ENCODE measurements at regions of chr9 and their contacts with region 1.

Region 1: DNA sequence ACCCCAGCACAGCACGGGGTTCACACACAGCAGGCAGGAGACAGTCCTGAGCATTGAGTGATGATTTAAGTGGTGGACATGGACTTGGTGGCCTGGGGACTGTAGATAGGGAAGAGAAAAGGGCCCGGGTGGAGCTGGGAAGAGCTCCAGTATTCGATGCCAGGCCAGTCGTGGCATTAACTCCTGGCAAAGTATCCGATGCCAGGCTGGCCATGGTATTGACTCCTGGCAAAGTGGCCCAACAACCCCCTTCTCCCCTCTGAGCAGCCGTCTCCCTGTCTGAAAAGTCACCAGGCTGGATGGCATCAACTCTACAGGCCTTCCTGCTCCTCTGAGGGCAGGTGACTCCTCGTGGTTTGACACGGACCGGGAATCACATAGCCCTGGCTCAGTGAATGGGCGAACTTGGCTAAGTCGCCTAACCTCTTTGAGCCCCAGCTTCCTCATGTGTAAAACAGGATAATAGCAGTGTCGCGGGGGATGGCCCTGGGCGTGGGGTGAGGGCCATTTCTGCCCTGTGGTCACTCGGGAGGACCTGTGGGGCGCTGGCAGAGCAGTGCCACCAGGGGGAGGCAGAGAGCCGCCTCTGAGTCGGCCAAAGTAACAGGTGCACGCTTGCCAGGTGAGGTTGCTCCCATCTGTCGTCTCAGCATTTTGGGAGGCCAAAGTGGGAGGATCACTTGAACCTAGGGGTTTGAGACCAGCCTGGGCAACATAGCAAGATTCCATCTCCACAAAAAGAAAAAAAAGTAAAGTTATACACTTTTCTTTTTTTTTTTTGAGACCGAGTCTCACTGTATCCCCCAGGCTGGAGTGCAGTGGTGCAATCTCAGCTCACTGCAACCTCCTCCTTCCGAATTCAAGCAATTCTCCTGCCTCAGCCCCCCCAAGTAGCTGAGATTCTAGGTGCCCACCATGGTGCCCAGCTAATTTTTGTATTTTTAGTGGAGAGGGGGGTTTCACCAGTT is 5.7 kb upstream of the SEC16A start:
- DNase-seq: no peak
- H3K4me3 ChIP-seq: no peak overlapping the region
- H3K27ac ChIP-seq: no peak overlapping the region
- H3K4me1 ChIP-seq: peaks cover 18% of the 10 kb centered on the region
- H3K27me3 ChIP-seq: no peaks in the 10 kb centered on the region
- CTCF ChIP-seq: peak; percentile 98 to 99 (median 98)
- POLR2A ChIP-seq: no peak

Region 2: GRCh38 chr9:135887585-135888050 is 600.9 kb before region 1 on chr9:
- intact Hi-C with region 1: no loop called
- DNase-seq: no peak
- H3K4me3 ChIP-seq: no peak overlapping the region
- H3K27ac ChIP-seq: no peak overlapping the region
- H3K4me1 ChIP-seq: peaks cover 78% of the 10 kb centered on the region
- H3K27me3 ChIP-seq: no peaks in the 10 kb centered on the region
- CTCF ChIP-seq: no peak
- POLR2A ChIP-seq: no peak

Region 3: DNA sequence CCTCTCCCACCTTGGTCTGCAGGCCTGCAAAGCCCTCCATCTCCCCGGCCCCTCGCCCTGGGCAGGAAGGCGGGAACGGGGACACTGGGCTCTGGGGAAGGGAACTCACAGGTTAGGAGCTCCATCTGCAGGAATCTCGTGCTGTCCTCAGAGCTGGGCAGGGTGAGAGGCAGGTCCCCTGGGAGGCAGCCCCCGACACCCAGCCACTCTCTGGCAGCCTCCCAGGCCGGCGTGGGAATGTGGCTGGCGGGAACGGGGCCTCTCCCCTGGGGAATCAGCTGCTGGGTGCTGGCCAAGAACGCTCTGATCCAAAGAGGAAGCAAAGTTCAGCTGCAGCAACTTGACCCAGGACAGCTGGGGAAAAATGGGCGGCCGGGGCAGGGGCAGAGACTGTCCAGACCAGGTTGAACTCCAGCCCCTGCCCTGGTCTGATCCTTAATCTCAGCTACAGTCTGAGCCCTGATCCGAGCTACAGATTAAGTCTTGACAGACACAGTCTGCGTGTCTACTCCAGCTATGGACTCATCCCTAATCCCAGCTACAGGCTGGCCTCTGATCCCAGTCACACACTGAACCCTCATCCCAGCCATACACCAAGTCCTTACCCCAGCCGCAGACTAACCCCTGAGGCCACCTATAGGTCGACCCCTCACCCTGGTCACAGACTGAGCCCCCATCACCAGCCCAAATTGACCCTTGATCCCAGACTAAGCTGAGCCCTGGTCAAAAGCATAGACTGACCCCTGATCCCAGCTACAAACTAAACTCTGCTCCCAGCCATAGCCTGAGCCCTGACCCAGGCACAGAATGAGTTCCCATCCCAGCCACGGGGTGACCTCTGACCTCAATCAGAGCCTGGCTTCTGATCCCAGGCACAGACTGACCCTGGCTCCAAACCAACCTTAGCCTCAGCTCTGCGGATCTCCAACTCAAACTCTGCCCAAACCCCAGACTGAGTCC is 136.8 kb after region 1 on chr9:
- intact Hi-C with region 1: loop called (anchors 2 kb)
- DNase-seq: no peak
- H3K4me3 ChIP-seq: no peak overlapping the region
- H3K27ac ChIP-seq: peak overlapping the region; percentile 36
- H3K4me1 ChIP-seq: peaks cover 71% of the 10 kb centered on the region
- H3K27me3 ChIP-seq: no peaks in the 10 kb centered on the region
- CTCF ChIP-seq: peak; percentile 22 to 44 (median 31)
- POLR2A ChIP-seq: no peak

Region 4: DNA sequence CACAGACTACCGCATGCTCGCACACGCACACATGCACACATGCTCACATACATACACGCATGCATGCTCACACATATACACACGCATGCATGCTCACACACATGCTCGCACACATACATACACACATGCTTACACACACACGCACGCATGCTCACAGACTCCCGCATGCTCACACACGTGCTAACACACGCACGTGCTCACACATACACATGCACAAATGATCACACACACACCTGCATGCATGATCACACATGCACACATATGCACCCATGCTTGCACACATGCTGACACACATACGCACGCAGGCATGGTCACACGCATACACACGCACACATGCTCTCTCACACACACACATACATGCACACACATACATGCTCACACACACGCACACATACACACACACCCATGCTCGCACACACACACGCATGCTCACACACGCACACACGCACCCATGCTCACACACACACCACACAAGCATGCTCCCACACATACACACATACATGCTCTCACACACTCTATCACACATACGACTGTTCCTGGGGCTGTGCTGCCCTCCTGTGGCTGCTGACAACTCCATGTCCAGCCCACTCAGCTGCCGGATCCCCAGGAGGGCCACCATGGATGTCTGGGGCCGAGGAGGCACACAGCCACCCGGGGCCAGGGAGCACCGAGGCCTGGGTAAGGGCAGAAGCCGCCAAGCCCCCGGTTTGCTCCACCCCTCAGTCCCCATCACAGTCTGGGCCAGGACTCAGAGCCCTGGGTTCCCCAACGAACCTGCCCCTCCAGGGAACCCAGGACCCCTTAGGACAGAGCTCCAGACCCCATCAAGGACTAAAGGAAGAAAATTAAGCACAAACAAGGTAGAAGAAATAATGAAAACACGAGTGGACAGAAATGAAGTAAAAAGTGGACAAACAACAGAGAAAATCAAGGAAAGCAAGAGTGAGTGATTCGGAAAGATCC is 142.8 kb after region 1 on chr9:
- intact Hi-C with region 1: loop called (anchors 2 kb)
- DNase-seq: no peak
- H3K4me3 ChIP-seq: no peak overlapping the region
- H3K27ac ChIP-seq: no peak overlapping the region
- H3K4me1 ChIP-seq: peaks cover 27% of the 10 kb centered on the region
- H3K27me3 ChIP-seq: no peaks in the 10 kb centered on the region
- CTCF ChIP-seq: peak; percentile 68 to 82 (median 72)
- POLR2A ChIP-seq: no peak